Activated T-helper 2 cell treated with anti-CD3 and anti-CD28 coated beads, Interferon-gamma antibody, Interleukin-2, Interleukin-4, amounts not matched to agents 10 μg/mL and 5 μg/mL and 100 μg/mL, durations not matched to agents 14 hours and 24 hours and 36 hours (primary cell): ENCODE measurements at regions of chr13 and their contacts with region 1.

Region 1: DNA sequence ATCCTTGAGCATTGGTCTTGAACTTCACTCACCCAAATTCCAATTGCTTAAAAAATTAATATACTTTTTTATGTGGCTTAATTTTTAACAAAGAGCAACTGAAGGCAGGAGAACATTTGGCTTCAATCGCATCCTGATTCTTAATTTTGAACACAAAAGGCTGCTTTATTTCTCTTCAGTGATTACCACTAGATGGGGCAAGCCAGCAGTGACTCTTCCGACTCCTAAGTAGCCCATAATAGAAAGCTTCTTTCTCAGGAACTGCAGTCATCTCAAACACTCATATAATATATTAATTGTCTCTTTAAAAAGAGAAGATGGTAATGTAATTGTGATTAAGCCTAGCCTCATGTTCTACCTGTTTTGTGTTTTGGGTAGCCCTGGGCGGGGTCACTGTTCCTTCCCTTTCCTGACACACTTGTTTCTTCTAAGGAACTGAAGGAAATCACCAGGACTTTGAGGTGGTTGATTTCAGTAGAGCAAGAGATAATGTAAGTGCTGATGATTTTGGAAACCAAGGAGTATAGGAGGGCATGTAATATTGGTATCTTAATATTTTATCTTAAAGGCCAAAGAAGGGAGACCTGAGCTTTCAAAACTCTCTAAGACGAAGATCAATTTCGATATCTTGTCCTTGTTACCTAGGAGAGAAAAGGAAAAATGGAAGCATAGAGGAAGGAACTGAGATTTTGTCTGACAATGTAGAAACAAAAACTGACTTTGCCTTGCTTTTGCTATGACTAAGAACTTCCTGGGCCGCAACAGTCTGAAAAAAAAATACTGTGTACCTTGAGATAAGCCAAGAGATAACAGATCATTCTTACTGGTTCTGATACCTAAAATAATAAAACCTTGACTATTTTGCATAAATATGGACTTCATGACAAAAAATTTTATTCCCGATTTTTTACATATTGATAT is 73.1 kb downstream of the TNFSF13B start:
- DNase-seq: no peak
- H3K4me3 Mint-ChIP-seq: no peak overlapping the region
- H3K27ac Mint-ChIP-seq: no peak overlapping the region
- H3K4me1 Mint-ChIP-seq: peaks cover 15% of the 10 kb centered on the region
- H3K27me3 Mint-ChIP-seq: peaks cover 16% of the 10 kb centered on the region

Region 2: GRCh38 chr13:108227651-108228272 is 114.9 kb before region 1 on chr13:
- intact Hi-C with region 1: loop called (anchors 10 kb)
- DNase-seq: no peak
- H3K4me3 Mint-ChIP-seq: no peak overlapping the region
- H3K27ac Mint-ChIP-seq: no peak overlapping the region
- H3K4me1 Mint-ChIP-seq: peaks cover 24% of the 10 kb centered on the region
- H3K27me3 Mint-ChIP-seq: no peaks in the 10 kb centered on the region

Region 3: GRCh38 chr13:108326309-108326708 is 16.3 kb before region 1 on chr13:
- intact Hi-C with region 1: no loop called
- DNase-seq: no peak
- H3K4me3 Mint-ChIP-seq: no peak overlapping the region
- H3K27ac Mint-ChIP-seq: no peak overlapping the region
- H3K4me1 Mint-ChIP-seq: peaks cover 1% of the 10 kb centered on the region
- H3K27me3 Mint-ChIP-seq: peaks cover 25% of the 10 kb centered on the region

Region 4: GRCh38 chr13:108795841-108796240 is 453.2 kb after region 1 on chr13:
- intact Hi-C with region 1: no loop called
- DNase-seq: no peak
- H3K4me3 Mint-ChIP-seq: no peak overlapping the region
- H3K27ac Mint-ChIP-seq: no peak overlapping the region
- H3K4me1 Mint-ChIP-seq: no peaks in the 10 kb centered on the region
- H3K27me3 Mint-ChIP-seq: no peaks in the 10 kb centered on the region